T-cell (primary cell): ENCODE measurements at regions of chr2 and their contacts with region 1.

Region 1: DNA sequence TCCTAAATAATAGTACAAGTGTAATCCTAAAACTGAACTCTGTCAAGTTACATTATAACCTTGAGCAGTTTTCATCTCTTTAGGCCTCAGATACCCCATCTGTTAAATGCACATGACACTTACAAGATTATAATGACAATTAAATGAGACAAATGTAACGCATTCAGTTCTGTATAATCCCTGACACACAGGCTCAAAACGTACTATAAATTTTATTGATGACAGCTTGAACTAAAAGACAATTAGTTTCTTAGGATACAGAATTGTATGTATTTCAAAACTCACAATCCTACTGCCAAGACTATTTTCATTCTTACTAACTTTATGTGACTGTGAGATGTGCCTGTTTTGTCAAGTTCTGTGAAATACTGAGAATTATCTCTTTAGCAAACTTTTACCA is 56.2 kb downstream of the GFPT1 start:
- DNase-seq: no peak
- ATAC-seq: no peak
- H3K4me3 ChIP-seq: no peak overlapping the region
- H3K4me3 Mint-ChIP-seq: no peak overlapping the region
- H3K27ac ChIP-seq: no peak overlapping the region
- H3K27ac Mint-ChIP-seq: no peak overlapping the region
- H3K4me1 ChIP-seq: no peaks in the 10 kb centered on the region
- H3K4me1 Mint-ChIP-seq: no peaks in the 10 kb centered on the region
- H3K27me3 ChIP-seq: no peaks in the 10 kb centered on the region
- H3K27me3 Mint-ChIP-seq: no peaks in the 10 kb centered on the region

Region 2: DNA sequence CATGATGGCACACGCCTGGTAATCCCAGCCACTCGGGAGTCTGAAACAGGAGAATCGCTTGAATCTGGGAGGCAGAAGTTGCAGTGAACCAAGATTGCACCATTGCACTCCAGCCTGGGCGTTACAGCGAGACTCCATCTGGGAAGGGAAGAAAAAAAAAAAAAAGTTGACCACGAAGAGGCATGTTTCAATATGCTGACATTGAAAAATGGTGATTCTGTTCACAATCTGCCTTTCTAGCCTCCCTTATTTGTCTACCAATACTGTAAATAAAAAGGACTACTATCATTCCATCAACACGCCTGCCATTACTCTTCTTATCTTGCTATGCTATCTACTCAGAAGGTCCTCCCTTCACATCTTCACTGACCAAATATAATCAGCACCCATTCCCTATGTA is 37.8 kb after region 1 on chr2:
- CTCF ChIA-PET with region 1: no interaction called
- POLR2A ChIA-PET with region 1: interaction called in 1 of 2 experiments, 10 read pairs
- DNase-seq: no peak
- ATAC-seq: no peak
- H3K4me3 ChIP-seq: no peak overlapping the region
- H3K4me3 Mint-ChIP-seq: no peak overlapping the region
- H3K27ac ChIP-seq: no peak overlapping the region
- H3K27ac Mint-ChIP-seq: no peak overlapping the region
- H3K4me1 ChIP-seq: no peaks in the 10 kb centered on the region
- H3K4me1 Mint-ChIP-seq: peaks cover 0 to 4% (median 0%) of the 10 kb centered on the region in 3 donors
- H3K27me3 ChIP-seq: no peaks in the 10 kb centered on the region
- H3K27me3 Mint-ChIP-seq: no peaks in the 10 kb centered on the region

Region 3: GRCh38 chr2:71049365-71050360 is 1718.9 kb after region 1 on chr2:
- CTCF ChIA-PET with region 1: no interaction called
- POLR2A ChIA-PET with region 1: no interaction called
- DNase-seq: peak in 9 of 35 experiments; percentile 9 to 52 (median 18)
- ATAC-seq: peak in 3 of 4 experiments; percentile 44 to 76 (median 52)
- H3K4me3 ChIP-seq: no peak overlapping the region
- H3K4me3 Mint-ChIP-seq: no peak overlapping the region
- H3K27ac ChIP-seq: no peak overlapping the region
- H3K27ac Mint-ChIP-seq: no peak overlapping the region
- H3K4me1 ChIP-seq: no peaks in the 10 kb centered on the region
- H3K4me1 Mint-ChIP-seq: peaks cover 0 to 5% (median 3%) of the 10 kb centered on the region in 3 donors
- H3K27me3 ChIP-seq: no peaks in the 10 kb centered on the region
- H3K27me3 Mint-ChIP-seq: peaks cover 0 to under 1% of the 10 kb centered on the region in 2 donors